ENCODE measurements at regions of chr16 and their contacts with region 1.

Region 1: DNA sequence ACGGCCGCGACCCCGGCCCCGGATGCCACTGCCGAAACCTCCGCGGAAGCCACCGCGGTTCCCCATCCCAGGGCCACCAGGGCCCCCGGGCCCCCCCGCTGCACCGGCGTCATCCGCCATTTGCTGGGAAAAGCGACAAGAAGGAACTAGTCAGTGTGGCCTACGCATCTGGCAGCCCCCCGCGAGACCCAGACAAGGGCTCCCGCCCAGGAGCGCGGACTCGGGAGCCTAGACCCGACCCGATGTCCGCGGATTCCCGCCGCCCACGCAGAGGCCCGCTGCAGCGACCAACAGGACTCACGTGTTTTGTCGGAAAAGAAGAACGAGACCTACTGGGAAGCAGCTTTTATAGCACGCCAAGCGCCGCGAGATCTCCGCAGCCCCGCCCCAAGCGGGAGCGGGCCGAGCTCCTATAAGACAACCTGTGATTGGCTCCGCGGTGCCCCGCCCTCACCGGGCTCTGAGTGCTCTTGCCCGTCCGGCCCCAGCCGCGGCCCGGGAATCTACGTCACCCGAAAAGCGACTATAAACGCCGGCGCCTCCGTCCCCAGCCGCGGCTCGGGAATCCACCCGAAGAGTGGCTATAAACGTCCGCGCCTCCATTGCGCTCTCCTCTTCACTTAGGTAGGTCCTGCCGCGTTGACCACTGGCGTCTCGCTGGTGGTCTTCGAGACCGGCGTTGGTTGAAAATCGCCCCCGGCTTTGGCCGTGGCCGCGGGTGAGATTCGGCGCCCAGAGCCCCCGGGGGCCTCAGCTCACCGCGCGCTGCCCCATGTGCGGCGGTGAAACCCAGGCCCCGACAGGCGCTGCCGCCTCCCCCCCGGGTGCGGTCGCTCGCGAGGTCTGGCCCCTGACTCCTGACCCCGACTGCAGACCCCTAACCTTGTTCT is at the start of gene RPS2:
- DNase-seq: peak; percentile 96 to 100 (median 98)
- H3K4me3 ChIP-seq: peak within 1 kb of the TSS; percentile 86
- H3K4me3 Mint-ChIP-seq: peak within 1 kb of the TSS; percentile 85 to 99 (median 94)
- H3K27ac ChIP-seq: peak within 1 kb of the TSS; percentile 93
- H3K27ac Mint-ChIP-seq: peak within 1 kb of the TSS; percentile 95 to 99 (median 98)
- H3K4me1 ChIP-seq: peaks cover 50% of the 10 kb centered on the region
- H3K4me1 Mint-ChIP-seq: peaks cover 43 to 52% (median 50%) of the 10 kb centered on the region in 3 donors
- H3K27me3 ChIP-seq: no peaks in the 10 kb centered on the region
- H3K27me3 Mint-ChIP-seq: peaks cover 0 to 1% of the 10 kb centered on the region in 2 donors
- total RNA-seq, gene RPS2: 5,023 to 5,213 TPM

Region 2: GRCh38 chr16:1782352-1783091 is 182.2 kb before region 1 on chr16 and contains the starts of genes NUBP2 and SPSB3:
- CTCF ChIA-PET with region 1: interaction called, 8 read pairs
- POLR2A ChIA-PET with region 1: interaction called, 17 read pairs
- DNase-seq: peak; percentile 98 to 99 (median 98)
- H3K4me3 ChIP-seq: peak within 1 kb of the TSS; percentile 82
- H3K4me3 Mint-ChIP-seq: peak within 1 kb of the TSS; percentile 89 to 96 (median 92)
- H3K27ac ChIP-seq: peak within 1 kb of the TSS; percentile 86
- H3K27ac Mint-ChIP-seq: peak within 1 kb of the TSS; percentile 87 to 97 (median 92)
- H3K4me1 ChIP-seq: peaks cover 35% of the 10 kb centered on the region
- H3K4me1 Mint-ChIP-seq: peaks cover 18 to 53% (median 26%) of the 10 kb centered on the region in 3 donors
- H3K27me3 ChIP-seq: no peaks in the 10 kb centered on the region
- H3K27me3 Mint-ChIP-seq: peaks cover 0 to 2% of the 10 kb centered on the region in 2 donors
- total RNA-seq, gene NUBP2: 73.9 to 82.8 TPM
- total RNA-seq, gene SPSB3: 30.6 to 31.5 TPM

Region 3: DNA sequence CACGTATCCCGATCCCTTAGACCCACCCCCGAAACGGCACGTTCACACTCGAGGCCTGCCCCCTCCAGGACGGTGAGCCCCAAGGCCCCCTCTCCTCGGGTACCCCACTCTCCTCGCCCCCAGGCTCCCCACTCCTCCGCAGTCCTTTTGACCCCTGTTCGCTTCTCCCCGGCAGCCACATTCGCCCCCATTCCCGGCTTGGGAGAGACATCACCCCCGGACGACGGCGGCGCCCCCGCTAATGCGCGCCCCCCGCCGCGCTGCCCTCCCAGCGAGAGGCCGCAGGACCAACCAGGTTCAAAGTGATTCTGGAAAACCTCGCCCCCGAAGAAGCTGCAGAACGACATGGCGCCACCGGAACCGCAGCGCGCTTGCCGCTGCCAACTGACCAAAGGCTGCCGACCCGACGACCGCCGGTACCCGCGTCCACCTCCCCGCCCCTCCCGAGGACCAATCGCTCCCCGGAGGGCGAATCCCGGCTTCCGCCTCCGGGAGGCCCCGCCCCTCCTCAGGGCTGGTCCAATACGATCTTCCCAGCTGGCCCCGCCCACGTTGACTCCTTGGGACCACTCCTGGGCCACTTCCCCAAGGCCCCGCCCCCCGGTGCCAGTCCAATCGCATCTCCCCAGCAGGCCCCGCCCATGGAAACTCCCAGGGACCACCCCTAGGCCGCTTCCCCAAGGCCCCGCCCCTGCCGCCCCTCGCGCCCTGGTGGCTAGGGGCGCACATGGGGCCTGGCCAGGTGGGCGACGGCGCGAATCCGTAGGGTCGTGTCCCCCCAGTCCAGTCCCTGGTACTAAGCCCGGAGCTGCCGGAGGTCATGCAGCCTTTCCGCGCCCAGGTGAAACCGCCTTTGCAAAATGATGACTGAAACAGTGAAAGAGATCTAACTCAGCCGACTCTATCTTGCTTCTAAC is 21.7 kb before region 1 on chr16 and contains the start of gene MSRB1:
- CTCF ChIA-PET with region 1: no interaction called
- POLR2A ChIA-PET with region 1: interaction called, 16 read pairs
- DNase-seq: peak; percentile 98 to 100 (median 100)
- H3K4me3 ChIP-seq: peak within 1 kb of the TSS; percentile 79
- H3K4me3 Mint-ChIP-seq: peak within 1 kb of the TSS; percentile 80 to 95 (median 88)
- H3K27ac ChIP-seq: peak within 1 kb of the TSS; percentile 72
- H3K27ac Mint-ChIP-seq: peak within 1 kb of the TSS; percentile 46 to 92 (median 78)
- H3K4me1 ChIP-seq: peaks cover 16% of the 10 kb centered on the region
- H3K4me1 Mint-ChIP-seq: peaks cover 8 to 24% (median 11%) of the 10 kb centered on the region in 3 donors
- H3K27me3 ChIP-seq: no peaks in the 10 kb centered on the region
- H3K27me3 Mint-ChIP-seq: no peaks in the 10 kb centered on the region
- total RNA-seq, gene MSRB1: 20.4 TPM

Region 4: GRCh38 chr16:1983544-1984346 is 19.0 kb after region 1 on chr16 and contains the start of gene GFER:
- CTCF ChIA-PET with region 1: interaction called, 3 read pairs
- POLR2A ChIA-PET with region 1: interaction called, 23 read pairs
- DNase-seq: peak; percentile 52 to 75 (median 58)
- H3K4me3 ChIP-seq: peak within 1 kb of the TSS; percentile 73
- H3K4me3 Mint-ChIP-seq: peak within 1 kb of the TSS; percentile 79 to 92 (median 82)
- H3K27ac ChIP-seq: peak within 1 kb of the TSS; percentile 54
- H3K27ac Mint-ChIP-seq: peak within 1 kb of the TSS; percentile 54 to 86 (median 74)
- H3K4me1 ChIP-seq: peaks cover 20% of the 10 kb centered on the region
- H3K4me1 Mint-ChIP-seq: peaks cover 11 to 27% (median 16%) of the 10 kb centered on the region in 3 donors
- H3K27me3 ChIP-seq: peaks cover 16% of the 10 kb centered on the region
- H3K27me3 Mint-ChIP-seq: peaks cover 16 to 19% of the 10 kb centered on the region in 2 donors
- total RNA-seq, gene GFER: 41.7 to 50.1 TPM

Region 5: DNA sequence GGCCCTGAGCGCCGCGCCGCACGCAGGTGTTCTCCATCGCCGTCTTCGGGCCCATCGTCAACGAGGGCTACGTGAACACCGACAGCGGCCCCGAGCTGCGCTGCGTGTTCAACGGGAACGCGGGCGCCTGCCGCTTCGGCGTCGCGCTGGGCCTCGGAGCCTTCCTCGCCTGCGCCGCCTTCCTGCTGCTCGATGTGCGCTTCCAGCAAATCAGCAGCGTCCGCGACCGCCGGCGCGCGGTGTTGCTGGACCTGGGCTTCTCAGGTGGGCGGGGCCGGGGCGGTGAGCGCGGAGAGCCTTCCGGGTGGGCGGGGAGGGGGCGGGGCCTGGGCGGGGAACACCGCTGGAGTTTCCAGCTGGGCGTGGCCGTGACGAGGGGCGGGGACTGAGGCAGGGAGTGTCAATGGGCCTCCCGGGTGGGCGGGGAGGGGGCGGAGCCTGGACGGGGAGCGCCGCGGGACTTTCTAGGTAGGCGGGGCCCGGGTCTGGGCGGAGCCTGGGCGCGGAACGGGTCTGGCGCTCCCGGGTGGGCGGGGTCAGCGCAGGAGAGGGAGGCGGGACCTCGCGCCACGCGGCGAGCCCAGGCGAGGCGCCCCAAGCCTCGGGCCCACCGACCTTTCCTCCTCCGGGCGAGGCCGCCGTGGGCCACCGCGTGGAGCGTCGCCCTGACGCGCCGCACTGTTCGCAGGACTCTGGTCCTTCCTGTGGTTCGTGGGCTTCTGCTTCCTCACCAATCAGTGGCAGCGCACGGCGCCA is 27.4 kb after region 1 on chr16:
- CTCF ChIA-PET with region 1: no interaction called
- POLR2A ChIA-PET with region 1: interaction called, 35 read pairs
- DNase-seq: peak; percentile 88 to 99 (median 98)
- H3K4me3 ChIP-seq: peak overlapping the region; percentile 64
- H3K4me3 Mint-ChIP-seq: peak overlapping the region; percentile 53 to 88 (median 79)
- H3K27ac ChIP-seq: peak overlapping the region; percentile 54
- H3K27ac Mint-ChIP-seq: peak overlapping the region in 5 of 8 donors; percentile 51 to 95 (median 89)
- H3K4me1 ChIP-seq: peaks cover 16% of the 10 kb centered on the region
- H3K4me1 Mint-ChIP-seq: peaks cover 16 to 38% (median 24%) of the 10 kb centered on the region in 3 donors
- H3K27me3 ChIP-seq: peaks cover 14% of the 10 kb centered on the region
- H3K27me3 Mint-ChIP-seq: peaks cover 5 to 10% of the 10 kb centered on the region in 2 donors

Measured in CD8-positive, alpha-beta memory T cell (primary cell).